ENCODE measurements at regions of chr12 and their contacts with region 1.

Region 1: DNA sequence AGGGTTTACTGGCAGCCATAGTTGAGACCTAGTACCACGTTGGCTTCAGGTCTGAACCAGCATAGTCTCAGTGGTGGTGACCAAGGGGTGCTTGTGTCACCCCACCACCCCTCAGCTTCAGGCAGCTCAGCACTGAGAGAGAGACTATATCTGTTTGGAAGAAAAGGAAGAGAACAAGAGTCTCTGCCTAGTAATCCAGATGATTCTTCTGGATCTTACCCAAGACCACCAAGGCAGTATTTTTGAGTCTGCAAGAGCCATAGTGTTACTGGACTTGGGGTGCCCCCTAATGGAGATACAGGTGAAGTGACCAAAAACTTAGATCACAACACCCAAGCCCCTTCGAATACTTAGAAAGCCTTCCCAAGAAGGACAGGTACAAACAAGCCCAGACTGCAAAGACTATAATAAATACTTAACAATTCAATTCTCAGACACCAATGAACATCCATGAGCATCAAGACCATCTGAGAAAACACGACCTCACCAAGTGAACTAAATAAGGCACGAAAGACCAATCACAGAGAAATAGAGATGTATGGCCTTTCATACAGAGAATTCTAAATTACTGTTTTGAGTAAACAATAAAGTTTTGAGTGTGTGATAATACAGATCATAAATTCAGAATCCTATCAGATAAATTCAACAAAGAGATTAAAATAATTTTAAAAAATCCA is 107.0 kb downstream of the HELB start:
- DNase-seq: peak in 4 of 5 donors; percentile 8 to 58 (median 50)
- H3K4me3 ChIP-seq: no peak overlapping the region
- H3K4me3 Mint-ChIP-seq: no peak overlapping the region
- H3K27ac ChIP-seq: no peak overlapping the region
- H3K27ac Mint-ChIP-seq: no peak overlapping the region
- H3K4me1 ChIP-seq: no peaks in the 10 kb centered on the region
- H3K4me1 Mint-ChIP-seq: peaks cover 0 to 5% (median 0%) of the 10 kb centered on the region in 3 donors
- H3K27me3 ChIP-seq: no peaks in the 10 kb centered on the region
- H3K27me3 Mint-ChIP-seq: peaks cover 6 to 29% of the 10 kb centered on the region in 2 donors

Region 2: DNA sequence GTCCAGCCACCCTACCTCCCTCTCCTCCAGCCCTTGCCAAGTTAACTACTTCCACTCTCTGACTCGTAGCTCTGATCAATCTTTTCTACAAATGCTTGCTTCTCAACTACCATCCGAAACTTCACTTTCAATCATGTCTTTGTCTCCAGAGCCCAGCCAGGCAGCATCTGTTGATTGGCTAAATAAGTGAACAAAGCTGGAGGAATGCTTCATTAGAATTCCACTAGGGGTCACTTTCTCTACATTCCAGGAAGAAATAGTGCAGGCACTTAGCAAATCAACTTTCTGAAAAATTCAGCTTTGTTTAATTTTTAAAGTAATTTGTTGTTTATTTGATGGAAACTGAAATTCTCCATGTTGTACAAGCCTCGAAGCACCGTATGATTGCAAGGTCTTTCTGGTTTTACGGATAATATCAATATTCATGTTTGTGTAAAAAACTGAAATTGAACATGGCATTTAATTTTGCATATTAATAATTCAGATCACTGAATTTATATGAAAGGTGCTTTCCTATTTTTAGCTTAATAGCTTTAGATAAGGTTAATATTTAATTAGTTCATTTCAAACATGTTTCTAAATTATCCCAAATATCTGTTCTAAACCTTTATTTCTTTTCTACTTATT is 139.5 kb before region 1 on chr12:
- CTCF ChIA-PET with region 1: interaction called, 57 read pairs
- POLR2A ChIA-PET with region 1: no interaction called
- DNase-seq: peak in 2 of 5 donors; percentile 33 to 46
- H3K4me3 ChIP-seq: no peak overlapping the region
- H3K4me3 Mint-ChIP-seq: no peak overlapping the region
- H3K27ac ChIP-seq: no peak overlapping the region
- H3K27ac Mint-ChIP-seq: no peak overlapping the region
- H3K4me1 ChIP-seq: peaks cover 20% of the 10 kb centered on the region
- H3K4me1 Mint-ChIP-seq: peaks cover 0 to 4% (median 0%) of the 10 kb centered on the region in 3 donors
- H3K27me3 ChIP-seq: no peaks in the 10 kb centered on the region
- H3K27me3 Mint-ChIP-seq: peaks cover 7 to 8% of the 10 kb centered on the region in 2 donors

Region 3: DNA sequence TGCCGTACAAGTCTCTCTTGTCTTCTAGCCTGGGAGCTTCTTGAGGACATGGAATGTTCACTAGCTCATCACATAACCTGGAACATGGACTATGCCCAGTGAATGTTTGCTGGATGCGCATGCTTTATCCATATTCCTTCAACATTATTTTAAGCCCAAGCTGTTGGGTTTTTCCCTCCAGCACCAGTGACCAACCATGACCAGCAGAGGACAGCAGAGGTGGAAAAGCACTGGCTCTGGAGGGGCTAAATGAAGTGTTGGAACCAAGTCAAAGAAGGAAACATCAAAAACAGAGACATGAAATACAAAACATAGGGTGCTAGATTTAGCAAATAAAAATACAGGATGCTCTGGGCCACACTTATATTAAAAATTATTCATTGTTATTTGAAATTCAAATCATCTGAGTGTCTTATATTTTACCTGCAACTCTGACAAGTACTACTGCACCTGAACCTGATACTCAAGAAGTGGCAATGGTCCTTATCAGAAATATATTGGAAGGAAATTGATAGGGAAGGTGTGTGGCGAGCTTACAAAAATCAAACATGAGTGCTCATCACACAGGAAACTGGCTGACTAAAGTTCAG is 130.1 kb before region 1 on chr12:
- CTCF ChIA-PET with region 1: interaction called, 15 read pairs
- POLR2A ChIA-PET with region 1: no interaction called
- DNase-seq: peak; percentile 13 to 67 (median 44)
- H3K4me3 ChIP-seq: no peak overlapping the region
- H3K4me3 Mint-ChIP-seq: peak overlapping the region in 4 of 7 donors; percentile 5 to 42 (median 32)
- H3K27ac ChIP-seq: no peak overlapping the region
- H3K27ac Mint-ChIP-seq: peak overlapping the region in 2 of 8 donors; percentile 14 to 53
- H3K4me1 ChIP-seq: peaks cover 30% of the 10 kb centered on the region
- H3K4me1 Mint-ChIP-seq: peaks cover 17 to 51% (median 48%) of the 10 kb centered on the region in 3 donors
- H3K27me3 ChIP-seq: no peaks in the 10 kb centered on the region
- H3K27me3 Mint-ChIP-seq: peaks cover 0 to 2% of the 10 kb centered on the region in 2 donors

Measured in CD8-positive, alpha-beta memory T cell (primary cell).